ENCODE measurements at regions of chr14 and their contacts with region 1.

Region 1: DNA sequence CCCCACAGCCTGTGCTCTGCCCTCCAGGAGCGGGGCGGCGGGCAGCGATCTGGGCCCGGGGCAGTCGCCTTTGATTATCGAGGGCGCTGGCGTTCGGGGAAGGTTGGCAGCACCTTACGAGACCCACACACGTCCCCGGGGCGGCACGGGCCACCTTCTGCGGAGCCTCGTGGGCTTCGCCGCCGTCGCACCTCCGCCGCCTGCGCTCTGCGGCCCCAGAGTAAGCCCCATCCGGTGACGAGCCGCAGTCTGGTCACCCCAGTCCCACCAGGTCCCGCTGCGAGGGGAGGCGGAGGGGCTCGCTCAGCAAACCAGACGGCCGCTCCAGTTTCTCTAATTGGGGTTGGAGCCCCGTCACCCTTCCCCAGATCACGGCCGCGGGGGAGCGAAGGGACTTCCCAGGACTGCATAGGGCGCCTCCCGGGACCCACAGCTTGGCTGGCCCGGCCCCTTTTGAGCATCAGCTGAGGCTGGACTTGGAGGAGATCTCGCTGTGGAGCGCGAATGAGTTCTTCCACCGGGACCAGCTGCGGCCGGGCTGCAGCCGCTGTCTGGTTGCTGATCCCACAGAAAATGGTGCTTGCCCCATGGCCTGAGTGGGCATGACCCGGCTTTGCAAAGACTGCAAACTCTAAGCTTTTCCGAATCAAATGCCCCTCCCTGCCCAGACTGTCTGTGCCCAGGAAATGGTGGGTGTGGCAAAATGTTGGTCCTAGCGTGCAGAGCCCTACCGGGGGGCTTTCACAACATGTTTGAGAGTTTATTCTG is 560 bp downstream of the LGALS3 start:
- H3K4me3 Mint-ChIP-seq: peak overlapping the region; percentile 89
- H3K27ac Mint-ChIP-seq: peak overlapping the region; percentile 94
- H3K4me1 Mint-ChIP-seq: peaks cover 70% of the 10 kb centered on the region
- H3K27me3 Mint-ChIP-seq: no peaks in the 10 kb centered on the region

Region 2: GRCh38 chr14:55097881-55098560 is 31.6 kb before region 1 on chr14:
- intact Hi-C with region 1: loop called (anchors 2 kb)
- H3K4me3 Mint-ChIP-seq: peak overlapping the region; percentile 59
- H3K27ac Mint-ChIP-seq: peak overlapping the region; percentile 91
- H3K4me1 Mint-ChIP-seq: peaks cover 59% of the 10 kb centered on the region
- H3K27me3 Mint-ChIP-seq: no peaks in the 10 kb centered on the region

Region 3: GRCh38 chr14:55170526-55170925 is 40.9 kb after region 1 on chr14:
- intact Hi-C with region 1: no loop called
- H3K4me3 Mint-ChIP-seq: no peak overlapping the region
- H3K27ac Mint-ChIP-seq: no peak overlapping the region
- H3K4me1 Mint-ChIP-seq: no peaks in the 10 kb centered on the region
- H3K27me3 Mint-ChIP-seq: no peaks in the 10 kb centered on the region

Measured in dendritic cell treated with granulocyte-macrophage colony-stimulating factor and Interleukin-4, amounts not matched to agents 40 ng/mL and 50 ng/mL, for 4 days (primary cell).